ENCODE measurements at regions of chr4 and their contacts with region 1.

Region 1: DNA sequence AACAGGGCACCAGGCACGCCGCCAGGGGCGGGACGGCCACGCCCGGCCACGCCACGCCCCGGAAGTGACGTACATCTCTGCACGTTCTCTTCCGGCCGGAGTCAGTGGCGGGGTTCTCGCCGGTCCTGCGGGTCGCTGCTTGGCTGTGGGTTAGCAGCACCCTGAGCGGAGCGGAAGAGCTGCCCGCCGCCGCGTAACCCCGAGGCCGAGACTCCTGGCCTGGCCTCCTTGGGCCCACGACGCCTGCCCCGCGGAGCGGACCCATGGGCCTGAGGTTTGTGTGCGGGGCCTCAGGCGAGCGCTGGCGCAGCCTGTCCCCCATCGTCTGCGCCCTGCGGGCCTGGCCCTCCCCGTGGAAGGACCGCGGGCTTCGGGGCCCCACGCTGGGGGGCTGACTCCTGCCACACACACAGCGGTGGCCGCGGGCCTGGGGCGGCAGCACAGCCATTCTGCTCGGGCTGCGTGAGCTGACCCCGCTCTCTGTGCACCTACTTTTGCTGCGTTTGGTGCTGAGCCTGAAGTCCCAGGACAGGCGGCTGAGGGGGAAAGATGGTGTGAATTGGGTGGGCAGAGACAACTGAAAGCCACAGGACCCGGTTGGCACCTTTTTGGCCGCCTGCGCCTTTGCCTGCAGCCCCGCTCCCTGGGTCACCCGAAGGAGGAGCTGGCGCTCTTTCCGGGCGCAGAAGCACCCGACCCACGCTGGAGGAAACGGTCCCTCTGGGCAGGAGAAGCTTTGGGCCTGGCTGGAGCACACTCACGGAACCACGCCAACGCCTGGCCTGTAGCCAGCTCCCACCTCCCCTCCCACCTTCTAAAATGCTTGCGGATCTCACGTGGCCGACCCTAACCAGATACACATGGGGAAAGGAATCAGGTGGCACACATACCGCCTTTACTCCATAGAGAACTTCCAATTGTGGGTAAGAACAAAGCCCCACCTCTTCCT is 28.1 kb downstream of the NOP14 start:
- DNase-seq: peak; percentile 95 to 98
- ATAC-seq: peak; percentile 80 to 90 (median 84)
- H3K4me3 ChIP-seq: peak overlapping the region; percentile 54 to 100 (median 94)
- H3K27ac ChIP-seq: peak overlapping the region; percentile 74 to 95 (median 90)
- H3K4me1 ChIP-seq: peaks cover 7 to 61% (median 57%) of the 10 kb centered on the region in 9 donors
- H3K27me3 ChIP-seq: no peaks in the 10 kb centered on the region
- CTCF ChIP-seq: peak in 2 of 9 donors; percentile 6 to 13

Region 2: DNA sequence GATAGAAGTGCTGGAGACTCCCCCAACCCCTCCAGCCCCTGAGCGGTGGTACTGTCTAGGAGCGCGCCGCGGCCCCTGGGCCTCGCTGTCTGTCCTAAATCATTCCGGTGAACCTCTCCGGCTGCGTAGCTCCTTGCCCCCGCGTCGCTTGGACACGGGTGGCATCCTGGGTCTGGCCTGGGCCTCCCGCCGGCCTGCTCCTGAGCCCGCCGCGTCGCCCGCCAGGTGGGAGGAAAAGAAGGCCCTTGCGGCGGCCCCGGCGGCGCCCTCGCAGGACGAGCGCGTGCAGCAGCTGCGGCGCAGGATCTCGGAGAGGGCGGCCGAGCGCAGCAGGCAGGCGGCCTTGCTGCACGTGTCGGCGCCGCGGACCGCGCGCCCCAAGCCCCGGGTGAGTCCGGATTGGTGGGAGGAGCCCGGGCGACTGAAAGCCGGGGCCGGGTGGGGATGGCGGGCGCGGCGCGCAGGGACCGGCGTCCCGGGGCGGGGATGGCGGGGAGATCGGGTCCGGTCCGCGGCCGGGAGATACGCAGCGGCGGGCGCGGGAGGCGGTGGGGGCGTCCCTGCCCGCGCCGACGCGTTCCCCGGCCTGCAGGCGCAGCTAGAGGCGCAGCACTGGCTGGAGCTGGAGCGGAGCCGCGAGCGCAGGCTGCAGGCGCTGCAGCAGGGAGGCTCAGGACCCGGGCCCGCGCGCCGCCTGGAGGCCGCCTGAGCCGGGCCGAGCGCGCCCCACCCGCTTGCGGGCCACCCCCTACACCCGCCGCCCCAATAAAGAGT is 472.7 kb before region 1 on chr4:
- intact Hi-C with region 1: no loop called
- DNase-seq: peak; percentile 54 to 75
- ATAC-seq: peak; percentile 89 to 97 (median 94)
- H3K4me3 ChIP-seq: peak overlapping the region; percentile 5 to 65 (median 56)
- H3K27ac ChIP-seq: peak overlapping the region in 8 of 10 donors; percentile 1 to 68 (median 34)
- H3K4me1 ChIP-seq: peaks cover 3 to 17% (median 9%) of the 10 kb centered on the region in 9 donors
- H3K27me3 ChIP-seq: peaks cover 0 to 15% (median 8%) of the 10 kb centered on the region in 7 donors
- CTCF ChIP-seq: peak; percentile 34 to 80 (median 65)

Region 3: DNA sequence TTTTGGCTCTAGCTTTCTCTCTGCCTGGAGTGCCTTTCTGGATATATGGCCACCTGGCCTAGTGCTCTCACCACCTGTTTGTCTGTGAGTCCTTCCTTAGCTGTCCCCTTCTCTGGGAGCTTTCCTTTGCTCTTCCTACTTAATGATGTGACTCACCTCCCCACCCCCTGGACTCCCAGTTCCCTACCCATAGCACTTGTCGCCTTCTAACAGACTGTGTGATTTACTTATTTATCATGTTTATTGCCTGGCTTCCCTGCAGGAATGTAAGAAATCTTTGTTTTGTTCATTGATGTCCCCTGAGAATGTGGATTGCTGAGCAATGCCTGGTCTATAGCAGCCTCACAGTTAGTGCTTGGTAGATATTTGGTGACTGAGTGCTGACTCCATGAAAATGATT is 72.6 kb before region 1 on chr4:
- intact Hi-C with region 1: loop called in 1 of 10 experiments (anchors 5 kb)
- DNase-seq: no peak
- ATAC-seq: peak in 1 of 8 donors; percentile 39
- H3K4me3 ChIP-seq: no peak overlapping the region
- H3K27ac ChIP-seq: peak overlapping the region; percentile 51 to 87 (median 71)
- H3K4me1 ChIP-seq: peaks cover 60 to 100% (median 98%) of the 10 kb centered on the region in 9 donors
- H3K27me3 ChIP-seq: no peaks in the 10 kb centered on the region
- CTCF ChIP-seq: no peak